ENCODE measurements at regions of chr2 and their contacts with region 1.

Region 1: GRCh38 chr2:64914735-64915509 is 74.3 kb upstream of the SLC1A4 start:
- DNase-seq: no peak
- H3K4me3 ChIP-seq: no peak overlapping the region
- H3K27me3 ChIP-seq: peaks cover 3% of the 10 kb centered on the region
- CTCF ChIP-seq: no peak

Region 2: GRCh38 chr2:64904413-64905329 is 10.3 kb before region 1 on chr2:
- CTCF ChIA-PET with region 1: interaction called, 38 read pairs
- POLR2A ChIA-PET with region 1: no interaction called
- DNase-seq: no peak
- H3K4me3 ChIP-seq: no peak overlapping the region
- H3K27me3 ChIP-seq: peaks cover 29% of the 10 kb centered on the region
- CTCF ChIP-seq: no peak

Region 3: GRCh38 chr2:64988420-64989125 is 73.7 kb after region 1 on chr2:
- CTCF ChIA-PET with region 1: interaction called, 36 read pairs
- POLR2A ChIA-PET with region 1: no interaction called
- DNase-seq: no peak
- H3K4me3 ChIP-seq: peak overlapping the region; percentile 73
- H3K27me3 ChIP-seq: peaks cover 1% of the 10 kb centered on the region; the same call in 1 of the 2 replicates
- CTCF ChIP-seq: peak; percentile 37; the same call in 1 of the 2 replicates

Region 4: GRCh38 chr2:65040400-65041261 is 125.7 kb after region 1 on chr2:
- CTCF ChIA-PET with region 1: interaction called, 147 read pairs
- POLR2A ChIA-PET with region 1: no interaction called
- DNase-seq: no peak
- H3K4me3 ChIP-seq: no peak overlapping the region
- H3K27me3 ChIP-seq: no peaks in the 10 kb centered on the region
- CTCF ChIP-seq: peak; percentile 89

Region 5: DNA sequence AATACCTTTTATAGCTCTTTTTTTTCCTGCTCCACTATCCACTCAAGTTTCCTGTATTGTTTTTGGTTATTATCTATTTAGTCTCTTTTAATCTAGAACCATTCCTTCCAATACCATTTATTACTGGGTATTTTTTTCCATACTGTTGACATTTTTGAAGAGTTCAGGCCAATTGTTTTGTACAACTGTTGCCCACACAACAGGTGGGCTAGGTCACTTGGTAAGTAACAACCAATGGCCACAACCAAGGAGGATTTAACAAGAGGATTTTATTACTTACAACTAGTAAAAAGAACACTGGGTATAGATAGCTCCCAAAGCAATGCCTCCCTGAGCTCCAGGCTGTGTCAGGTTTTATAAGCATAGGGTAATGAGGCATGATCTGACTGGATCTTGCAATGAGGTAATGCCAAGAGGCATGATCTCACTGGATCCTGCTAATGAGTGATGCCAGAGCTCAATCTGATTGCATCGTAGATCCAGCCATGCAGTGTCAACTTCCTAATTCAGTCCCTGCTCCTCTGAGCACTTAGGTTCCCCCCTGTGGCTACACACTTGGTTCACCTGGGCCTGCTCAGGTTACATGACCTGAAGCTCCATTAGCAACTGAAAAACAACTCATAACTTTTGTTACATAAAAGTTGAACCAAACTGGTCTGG is 134.2 kb after region 1 on chr2:
- CTCF ChIA-PET with region 1: interaction called, 18 read pairs
- POLR2A ChIA-PET with region 1: no interaction called
- DNase-seq: no peak
- H3K4me3 ChIP-seq: no peak overlapping the region
- H3K27me3 ChIP-seq: peaks cover 4% of the 10 kb centered on the region
- CTCF ChIP-seq: no peak

Region 6: GRCh38 chr2:65056215-65057053 is 141.5 kb after region 1 on chr2 and contains the start of gene CEP68:
- CTCF ChIA-PET with region 1: interaction called, 10 read pairs
- POLR2A ChIA-PET with region 1: no interaction called
- DNase-seq: peak; percentile 83
- H3K4me3 ChIP-seq: peak within 1 kb of the TSS; percentile 52
- H3K27me3 ChIP-seq: no peaks in the 10 kb centered on the region
- CTCF ChIP-seq: no peak
- polyA plus RNA-seq, gene CEP68: 5.8 and 11.7 TPM in 2 replicates

Region 7: GRCh38 chr2:65220432-65221131 is 305.7 kb after region 1 on chr2:
- CTCF ChIA-PET with region 1: no interaction called
- POLR2A ChIA-PET with region 1: no interaction called
- DNase-seq: no peak
- H3K4me3 ChIP-seq: no peak overlapping the region
- H3K27me3 ChIP-seq: no peaks in the 10 kb centered on the region
- CTCF ChIP-seq: no peak

Region 8: DNA sequence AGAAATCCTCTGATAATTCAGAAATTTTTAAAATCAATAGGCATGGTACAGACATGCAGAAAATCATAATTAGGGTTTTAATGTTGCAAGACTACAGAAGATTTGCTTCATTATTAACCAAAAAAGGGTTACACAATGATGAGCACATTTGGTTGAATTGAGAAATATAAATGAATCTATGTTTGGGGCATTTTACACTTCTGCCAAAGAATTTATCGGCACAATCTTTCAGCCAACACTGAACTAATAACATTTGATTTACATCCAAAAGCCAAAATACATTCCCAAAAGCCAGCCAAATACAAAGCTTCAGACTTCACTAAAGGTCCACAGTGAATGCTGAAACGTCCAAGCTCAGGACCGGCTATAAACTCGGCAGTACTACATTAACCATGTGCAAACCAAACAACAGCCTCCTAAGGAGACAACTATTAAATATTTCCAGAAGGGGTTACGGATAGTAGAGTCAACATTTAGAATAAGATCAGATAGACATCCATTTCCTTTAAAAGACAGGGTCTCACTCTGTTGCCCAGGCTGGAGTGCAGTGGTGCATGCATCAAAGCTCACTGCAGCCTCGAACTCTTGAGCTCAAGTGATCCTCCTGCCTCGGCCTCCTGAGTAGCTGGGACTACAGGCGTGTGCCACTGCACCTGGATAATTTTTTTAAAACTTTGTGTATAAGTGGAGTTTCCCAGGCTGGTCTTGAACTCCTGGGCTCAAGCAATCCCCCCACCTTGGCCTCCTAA is 488.0 kb after region 1 on chr2:
- CTCF ChIA-PET with region 1: no interaction called
- POLR2A ChIA-PET with region 1: no interaction called
- DNase-seq: no peak
- H3K4me3 ChIP-seq: no peak overlapping the region
- H3K27me3 ChIP-seq: no peaks in the 10 kb centered on the region
- CTCF ChIP-seq: no peak